Activated CD8-positive, alpha-beta T cell treated with anti-CD3 and anti-CD28 coated beads, Interleukin-2, amount 10 ng/mL, durations not matched to agents 7 days and 5 days (primary cell): ENCODE measurements at regions of chr11 and their contacts with region 1.

Region 1: DNA sequence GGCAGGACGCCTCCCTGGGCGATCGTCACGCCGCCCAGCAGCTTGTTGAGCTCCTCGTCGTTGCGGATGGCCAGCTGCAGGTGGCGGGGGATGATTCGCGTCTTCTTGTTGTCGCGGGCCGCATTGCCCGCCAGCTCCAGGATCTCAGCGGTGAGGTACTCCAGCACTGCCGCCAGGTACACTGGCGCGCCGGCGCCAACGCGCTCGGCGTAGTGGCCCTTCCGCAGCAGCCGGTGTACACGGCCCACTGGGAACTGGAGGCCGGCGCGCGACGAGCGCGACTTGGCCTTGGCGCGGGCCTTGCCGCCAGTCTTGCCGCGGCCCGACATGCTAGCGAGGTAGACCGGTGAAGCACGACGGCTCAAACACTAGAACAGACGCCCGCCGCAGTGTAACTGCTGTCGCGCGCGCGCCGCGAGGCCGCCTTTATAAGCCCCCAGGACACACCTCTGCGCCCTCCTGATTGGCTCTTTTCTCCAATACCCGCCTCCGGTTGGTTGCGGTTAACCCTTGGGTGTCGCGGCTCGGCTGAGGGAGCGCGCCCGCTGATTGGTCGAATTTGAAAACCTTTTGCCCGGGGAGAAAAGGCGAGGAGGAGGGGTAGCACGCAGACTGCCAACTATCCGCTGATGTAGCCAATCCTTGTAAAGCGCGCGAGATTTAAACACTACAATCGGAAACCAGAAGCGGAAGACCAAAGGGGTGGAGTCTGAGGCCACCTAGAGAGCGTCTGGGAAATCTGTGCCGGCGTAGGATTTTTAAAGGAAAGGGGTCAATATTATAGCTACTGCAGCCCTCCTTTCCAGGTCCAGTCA is 6.4 kb downstream of the DPAGT1 start:
- DNase-seq: peak; percentile 100
- ATAC-seq: peak; percentile 81
- H3K4me3 Mint-ChIP-seq: peak overlapping the region; percentile 95
- H3K27ac Mint-ChIP-seq: peak overlapping the region; percentile 97
- H3K4me1 Mint-ChIP-seq: peaks cover 59% of the 10 kb centered on the region
- H3K27me3 Mint-ChIP-seq: no peaks in the 10 kb centered on the region

Region 2: GRCh38 chr11:118997627-118998387 is 97.5 kb before region 1 on chr11 and contains the start of gene CENATAC:
- CTCF ChIA-PET with region 1: interaction called, 3 read pairs
- POLR2A ChIA-PET with region 1: interaction called, 10 read pairs
- DNase-seq: peak; percentile 97
- ATAC-seq: peak; percentile 96
- H3K4me3 Mint-ChIP-seq: peak within 1 kb of the TSS; percentile 90
- H3K27ac Mint-ChIP-seq: peak within 1 kb of the TSS; percentile 92
- H3K4me1 Mint-ChIP-seq: peaks cover 39% of the 10 kb centered on the region
- H3K27me3 Mint-ChIP-seq: no peaks in the 10 kb centered on the region
- total RNA-seq, gene CENATAC: 39.3 to 41.1 TPM

Region 3: GRCh38 chr11:119018074-119018938 is 77.0 kb before region 1 on chr11 and contains the starts of genes RPS25 and TRAPPC4:
- CTCF ChIA-PET with region 1: no interaction called
- POLR2A ChIA-PET with region 1: interaction called, 14 read pairs
- DNase-seq: peak; percentile 98
- ATAC-seq: peak; percentile 93
- H3K4me3 Mint-ChIP-seq: peak within 1 kb of the TSS; percentile 99
- H3K27ac Mint-ChIP-seq: peak within 1 kb of the TSS; percentile 100
- H3K4me1 Mint-ChIP-seq: peaks cover 48% of the 10 kb centered on the region
- H3K27me3 Mint-ChIP-seq: no peaks in the 10 kb centered on the region
- total RNA-seq, gene RPS25: 1,115 to 1,170 TPM
- total RNA-seq, gene TRAPPC4: 58.6 to 65.0 TPM

Region 4: GRCh38 chr11:119084663-119085436 is 10.4 kb before region 1 on chr11 and contains the start of gene HMBS:
- CTCF ChIA-PET with region 1: interaction called, 5 read pairs
- POLR2A ChIA-PET with region 1: interaction called, 64 read pairs
- DNase-seq: peak; percentile 94
- ATAC-seq: peak; percentile 90
- H3K4me3 Mint-ChIP-seq: peak within 1 kb of the TSS; percentile 98
- H3K27ac Mint-ChIP-seq: peak within 1 kb of the TSS; percentile 97
- H3K4me1 Mint-ChIP-seq: peaks cover 34% of the 10 kb centered on the region
- H3K27me3 Mint-ChIP-seq: no peaks in the 10 kb centered on the region
- total RNA-seq, gene HMBS: 31.0 to 32.5 TPM

Region 5: GRCh38 chr11:119115484-119116234 is 20.4 kb after region 1 on chr11:
- CTCF ChIA-PET with region 1: interaction called, 3 read pairs
- POLR2A ChIA-PET with region 1: interaction called, 96 read pairs
- DNase-seq: peak; percentile 59
- ATAC-seq: peak; percentile 75
- H3K4me3 Mint-ChIP-seq: peak overlapping the region; percentile 71
- H3K27ac Mint-ChIP-seq: peak overlapping the region; percentile 97
- H3K4me1 Mint-ChIP-seq: peaks cover 46% of the 10 kb centered on the region
- H3K27me3 Mint-ChIP-seq: no peaks in the 10 kb centered on the region

Region 6: GRCh38 chr11:119121008-119121810 is 25.9 kb after region 1 on chr11 and contains the start of gene HINFP:
- CTCF ChIA-PET with region 1: interaction called, 3 read pairs
- POLR2A ChIA-PET with region 1: interaction called, 29 read pairs
- DNase-seq: peak; percentile 100
- ATAC-seq: peak; percentile 97
- H3K4me3 Mint-ChIP-seq: peak within 1 kb of the TSS; percentile 81
- H3K27ac Mint-ChIP-seq: peak within 1 kb of the TSS; percentile 67
- H3K4me1 Mint-ChIP-seq: peaks cover 36% of the 10 kb centered on the region
- H3K27me3 Mint-ChIP-seq: no peaks in the 10 kb centered on the region
- total RNA-seq, gene HINFP: 36.1 to 40.9 TPM

Region 7: DNA sequence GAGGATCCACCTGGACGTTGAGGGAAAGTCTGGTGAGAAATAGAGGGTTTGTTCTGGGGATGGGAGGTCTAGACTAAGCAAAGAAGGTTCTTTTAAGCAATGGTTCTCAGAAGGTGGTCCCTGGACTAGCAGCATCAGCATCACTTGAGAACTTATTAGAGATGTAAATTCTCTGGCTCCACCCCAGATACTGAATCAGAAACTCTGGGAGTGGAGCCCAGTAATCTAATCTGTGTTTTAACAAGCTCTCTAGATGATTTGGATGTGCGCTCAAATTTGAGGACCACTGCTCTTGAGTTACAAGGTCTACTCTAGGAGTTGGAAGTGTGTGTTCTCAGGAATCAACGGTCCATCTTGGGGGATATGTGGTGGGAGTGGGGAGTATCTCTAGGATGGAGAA is 50.3 kb after region 1 on chr11:
- CTCF ChIA-PET with region 1: no interaction called
- POLR2A ChIA-PET with region 1: no interaction called
- DNase-seq: no peak
- ATAC-seq: no peak
- H3K4me3 Mint-ChIP-seq: no peak overlapping the region
- H3K27ac Mint-ChIP-seq: no peak overlapping the region
- H3K4me1 Mint-ChIP-seq: peaks cover 13% of the 10 kb centered on the region
- H3K27me3 Mint-ChIP-seq: peaks cover 46% of the 10 kb centered on the region